ENCODE measurements at regions of chrX and their contacts with region 1.

Region 1: GRCh38 chrX:154013614-154014360 is 5.9 kb downstream of the IRAK1 start:
- DNase-seq: no peak
- H3K4me3 ChIP-seq: no peak overlapping the region
- H3K27ac ChIP-seq: no peak overlapping the region
- H3K4me1 ChIP-seq: peaks cover 15% of the 10 kb centered on the region
- H3K27me3 ChIP-seq: no peaks in the 10 kb centered on the region
- CTCF ChIP-seq: peak; percentile 85

Region 2: GRCh38 chrX:154051201-154051810 is 37.5 kb after region 1 on chrX:
- intact Hi-C with region 1: loop called (anchors 5 kb)
- DNase-seq: peak; percentile 60
- H3K4me3 ChIP-seq: no peak overlapping the region
- H3K27ac ChIP-seq: peak overlapping the region; percentile 73
- H3K4me1 ChIP-seq: peaks cover 58% of the 10 kb centered on the region
- H3K27me3 ChIP-seq: no peaks in the 10 kb centered on the region
- CTCF ChIP-seq: peak; percentile 67

Region 3: GRCh38 chrX:154115071-154115470 is 101.3 kb after region 1 on chrX:
- intact Hi-C with region 1: no loop called
- DNase-seq: no peak
- H3K4me3 ChIP-seq: no peak overlapping the region
- H3K27ac ChIP-seq: no peak overlapping the region
- H3K4me1 ChIP-seq: no peaks in the 10 kb centered on the region
- H3K27me3 ChIP-seq: no peaks in the 10 kb centered on the region
- CTCF ChIP-seq: no peak

Region 4: DNA sequence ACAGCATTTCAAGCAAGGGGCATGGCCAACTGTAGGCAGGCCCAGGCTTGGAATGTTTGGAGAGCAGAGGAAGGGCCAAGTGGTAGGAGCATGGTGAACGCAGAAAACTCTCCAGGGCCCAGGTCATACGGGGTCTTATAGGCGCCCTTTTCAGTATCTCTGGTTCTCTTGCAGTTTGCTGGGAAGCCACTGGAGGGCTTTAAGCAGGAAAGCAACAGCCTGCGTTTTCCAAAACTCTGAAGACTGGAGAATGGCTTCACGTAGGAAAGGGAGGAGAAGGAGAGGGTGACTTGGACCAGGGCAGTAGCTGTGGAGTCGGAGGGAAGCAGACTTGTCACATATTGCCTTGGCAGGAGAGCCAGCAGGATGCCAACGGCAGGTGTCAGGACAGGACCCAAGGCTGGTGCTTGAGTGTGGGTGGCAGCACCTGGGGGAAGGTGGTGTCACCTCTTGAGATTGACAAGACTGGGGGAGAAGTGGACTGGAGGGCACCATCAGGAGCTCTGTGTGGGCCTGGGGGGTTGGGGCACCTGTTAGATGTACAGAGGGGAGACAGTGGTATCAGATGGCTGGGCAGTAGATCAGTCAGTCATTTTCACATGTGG is 303.7 kb after region 1 on chrX:
- intact Hi-C with region 1: no loop called
- DNase-seq: no peak
- H3K4me3 ChIP-seq: no peak overlapping the region
- H3K27ac ChIP-seq: no peak overlapping the region
- H3K4me1 ChIP-seq: no peaks in the 10 kb centered on the region
- H3K27me3 ChIP-seq: no peaks in the 10 kb centered on the region
- CTCF ChIP-seq: peak; percentile 65